PC-9 (cell line): ENCODE measurements at regions of chr5 and their contacts with region 1.

Region 1: DNA sequence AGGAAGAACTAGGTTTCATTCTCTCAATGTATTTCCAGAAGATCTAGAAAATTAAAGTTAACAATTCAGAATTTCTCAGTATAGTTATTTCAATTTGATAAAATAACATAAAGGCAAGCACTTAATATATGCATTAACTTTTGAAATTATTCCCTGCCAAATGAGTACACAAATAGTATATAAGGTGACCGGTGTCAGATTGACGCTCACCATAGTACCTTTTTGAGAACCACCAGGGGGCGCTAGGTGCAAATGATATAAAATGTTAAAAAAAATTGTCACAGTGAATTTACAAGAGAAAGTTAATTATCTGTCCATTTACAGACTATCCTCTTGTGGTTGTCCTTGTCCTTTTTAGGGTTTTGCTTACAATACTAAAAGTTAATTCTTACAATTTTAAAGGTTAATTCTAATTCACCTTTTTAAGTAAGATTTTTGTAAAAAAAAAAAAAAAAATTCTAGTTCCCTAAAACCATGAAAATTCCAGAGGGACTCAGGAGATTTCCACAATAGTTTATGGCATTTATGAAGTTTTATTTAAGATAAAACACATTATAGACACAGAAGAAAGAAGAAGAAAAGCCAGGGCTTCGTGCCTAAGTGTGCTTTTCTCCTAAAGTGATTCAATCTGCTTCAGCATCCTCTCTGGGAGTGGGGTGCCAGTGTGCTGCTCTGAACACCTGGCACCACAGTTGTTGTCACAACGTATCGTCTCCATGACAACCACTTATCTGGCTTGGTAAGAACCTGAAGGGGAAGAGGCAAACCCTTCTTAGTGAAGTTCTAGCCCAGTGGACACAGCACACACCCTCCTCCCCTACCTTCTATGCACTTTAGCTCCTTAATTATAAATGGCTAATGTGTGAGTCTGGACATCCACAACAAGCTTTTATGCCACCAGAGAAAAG is 1.7 kb downstream of the ADAMTS16 start:
- DNase-seq: peak; percentile 60 to 65
- H3K4me3 ChIP-seq: no peak overlapping the region
- H3K27ac ChIP-seq: no peak overlapping the region
- H3K4me1 ChIP-seq: peaks cover 20% of the 10 kb centered on the region
- H3K27me3 ChIP-seq: no peaks in the 10 kb centered on the region
- CTCF ChIP-seq: peak; percentile 97

Region 2: DNA sequence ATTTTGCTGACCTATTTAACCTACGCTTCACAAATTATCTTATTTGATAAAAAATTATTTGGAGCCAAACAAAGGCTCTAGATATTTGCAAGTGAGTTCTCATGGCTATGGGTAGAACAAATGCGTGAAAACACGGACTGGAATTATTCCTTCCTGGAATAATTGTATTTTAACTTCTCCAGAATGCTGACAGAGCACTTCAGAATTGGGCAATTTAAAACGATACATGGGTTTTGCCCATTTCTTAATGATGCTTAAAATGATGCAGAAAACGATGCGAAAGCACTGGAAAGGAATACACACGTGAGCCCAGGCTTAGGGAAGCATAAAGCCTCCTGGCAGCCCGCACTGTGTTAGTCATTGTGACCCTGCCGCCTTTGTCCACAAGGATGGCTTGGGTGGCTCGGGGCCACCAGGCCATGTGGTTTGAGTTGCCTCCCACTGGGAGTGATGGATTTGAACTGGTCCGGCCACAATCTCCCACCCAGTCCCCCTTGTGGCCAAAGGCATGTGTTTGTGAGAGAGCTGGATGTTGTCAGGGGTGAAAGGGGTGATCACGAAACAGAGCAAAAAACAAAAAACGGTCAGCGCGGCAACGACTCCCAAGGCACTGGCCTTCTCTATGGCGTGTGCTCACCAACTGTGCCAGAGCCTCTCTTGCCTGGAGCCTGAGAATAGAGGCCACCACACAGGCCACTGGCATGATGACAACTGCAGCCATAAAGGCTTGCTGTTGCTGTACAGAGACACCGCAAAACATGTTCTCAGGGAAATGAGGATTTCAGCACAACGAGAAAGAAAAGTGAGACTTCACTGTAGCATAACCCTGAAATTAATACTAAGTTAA is 236.0 kb before region 1 on chr5:
- CTCF ChIA-PET with region 1: no interaction called
- POLR2A ChIA-PET with region 1: no interaction called
- intact Hi-C with region 1: no loop called
- DNase-seq: no peak
- H3K4me3 ChIP-seq: no peak overlapping the region
- H3K27ac ChIP-seq: no peak overlapping the region
- H3K4me1 ChIP-seq: no peaks in the 10 kb centered on the region
- H3K27me3 ChIP-seq: peaks cover 76% of the 10 kb centered on the region
- CTCF ChIP-seq: no peak

Region 3: GRCh38 chr5:5165541-5166002 is 23.7 kb after region 1 on chr5:
- CTCF ChIA-PET with region 1: interaction called, 3 read pairs
- POLR2A ChIA-PET with region 1: no interaction called
- intact Hi-C with region 1: loop called (anchors 1 kb)
- DNase-seq: peak; percentile 41 to 55
- H3K4me3 ChIP-seq: no peak overlapping the region
- H3K27ac ChIP-seq: no peak overlapping the region
- H3K4me1 ChIP-seq: no peaks in the 10 kb centered on the region
- H3K27me3 ChIP-seq: no peaks in the 10 kb centered on the region
- CTCF ChIP-seq: no peak

Region 4: DNA sequence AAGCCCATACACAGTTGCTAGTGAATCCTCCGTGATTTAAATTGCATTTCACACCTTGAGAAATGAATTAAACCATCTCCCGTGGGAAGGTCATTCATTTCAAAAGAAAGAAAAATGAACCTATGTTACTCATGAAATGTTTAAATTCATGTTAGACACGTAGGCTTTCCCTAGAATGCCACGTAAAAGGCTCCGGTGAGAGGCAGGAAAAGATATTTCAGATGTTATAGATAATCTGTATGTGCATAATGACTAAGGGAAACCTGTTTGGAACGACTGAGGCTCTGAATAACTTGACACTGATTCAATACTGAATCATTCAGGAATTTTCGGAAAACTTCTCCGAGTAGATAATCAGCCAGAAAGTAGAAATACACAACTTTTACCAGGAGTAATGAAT is 146.3 kb after region 1 on chr5:
- CTCF ChIA-PET with region 1: interaction called, 6 read pairs
- POLR2A ChIA-PET with region 1: no interaction called
- intact Hi-C with region 1: loop called (anchors 1 kb)
- DNase-seq: peak; percentile 55 to 88
- H3K4me3 ChIP-seq: no peak overlapping the region
- H3K27ac ChIP-seq: peak overlapping the region; percentile 84
- H3K4me1 ChIP-seq: peaks cover 29% of the 10 kb centered on the region
- H3K27me3 ChIP-seq: no peaks in the 10 kb centered on the region
- CTCF ChIP-seq: no peak

Region 5: DNA sequence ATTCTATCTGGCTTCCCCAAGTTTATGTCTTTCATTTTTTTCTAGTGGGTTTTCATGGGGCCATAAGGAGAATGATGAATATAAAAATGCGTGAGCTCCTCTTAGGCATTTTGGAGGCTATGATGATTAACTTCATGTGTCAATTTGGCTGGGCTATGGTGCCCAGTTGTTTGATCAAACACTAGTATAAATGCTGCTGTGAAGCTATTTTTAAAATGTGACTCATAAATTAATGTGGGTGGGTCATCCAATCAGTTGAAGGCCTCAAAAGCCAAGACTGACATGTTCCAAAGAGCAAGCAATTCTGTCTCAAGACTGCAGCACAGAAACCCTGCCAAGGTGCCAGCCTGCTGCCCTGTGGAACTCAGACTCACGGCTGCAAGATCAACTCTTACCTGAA is 256.2 kb after region 1 on chr5:
- CTCF ChIA-PET with region 1: interaction called, 5 read pairs
- POLR2A ChIA-PET with region 1: interaction called, 4 read pairs
- intact Hi-C with region 1: loop called (anchors 1 kb)
- DNase-seq: no peak
- H3K4me3 ChIP-seq: no peak overlapping the region
- H3K27ac ChIP-seq: no peak overlapping the region
- H3K4me1 ChIP-seq: no peaks in the 10 kb centered on the region
- H3K27me3 ChIP-seq: no peaks in the 10 kb centered on the region
- CTCF ChIP-seq: no peak

Region 6: DNA sequence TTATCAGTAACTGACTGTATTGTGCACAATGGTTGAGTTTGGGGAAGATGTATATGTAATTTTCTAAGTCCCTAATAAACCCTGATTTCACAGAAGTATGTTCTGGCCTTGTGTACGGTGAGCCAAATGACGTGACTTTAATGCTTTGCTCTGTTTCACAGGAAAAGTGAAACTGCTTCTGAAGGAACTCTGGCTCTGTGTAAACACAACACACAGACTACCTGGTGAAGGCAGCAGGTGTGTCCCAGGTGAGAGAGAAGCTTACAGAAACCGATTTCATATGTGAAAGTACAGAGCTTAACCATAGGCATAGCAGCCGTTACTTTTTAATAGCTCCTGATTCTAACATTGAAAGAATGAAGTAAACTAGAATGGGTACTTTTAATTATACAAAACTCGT is 312.5 kb after region 1 on chr5:
- CTCF ChIA-PET with region 1: no interaction called
- POLR2A ChIA-PET with region 1: no interaction called
- intact Hi-C with region 1: no loop called
- DNase-seq: no peak
- H3K4me3 ChIP-seq: no peak overlapping the region
- H3K27ac ChIP-seq: no peak overlapping the region
- H3K4me1 ChIP-seq: no peaks in the 10 kb centered on the region
- H3K27me3 ChIP-seq: no peaks in the 10 kb centered on the region
- CTCF ChIP-seq: no peak

Region 7: GRCh38 chr5:5533927-5534326 is 392.0 kb after region 1 on chr5:
- CTCF ChIA-PET with region 1: no interaction called
- POLR2A ChIA-PET with region 1: no interaction called
- intact Hi-C with region 1: no loop called
- DNase-seq: no peak
- H3K4me3 ChIP-seq: no peak overlapping the region
- H3K27ac ChIP-seq: no peak overlapping the region
- H3K4me1 ChIP-seq: no peaks in the 10 kb centered on the region
- H3K27me3 ChIP-seq: peaks cover 80% of the 10 kb centered on the region
- CTCF ChIP-seq: no peak

Region 8: GRCh38 chr5:6632917-6633468 is 1491.1 kb after region 1 on chr5 and contains the starts of genes NSUN2 and SRD5A1:
- CTCF ChIA-PET with region 1: no interaction called
- POLR2A ChIA-PET with region 1: no interaction called
- intact Hi-C with region 1: loop called (anchors 10 kb)
- DNase-seq: peak; percentile 79 to 99
- H3K4me3 ChIP-seq: peak within 1 kb of the TSS; percentile 72
- H3K27ac ChIP-seq: peak within 1 kb of the TSS; percentile 83
- H3K4me1 ChIP-seq: peaks cover 22% of the 10 kb centered on the region
- H3K27me3 ChIP-seq: no peaks in the 10 kb centered on the region
- CTCF ChIP-seq: no peak
- total RNA-seq, gene NSUN2: 148 and 155 TPM in 2 replicates
- total RNA-seq, gene SRD5A1: 52.3 and 56.7 TPM in 2 replicates